ENCODE measurements at regions of chr4 and their contacts with region 1.

Region 1: GRCh38 chr4:43776371-43776770 is 672.2 kb downstream of the KCTD8 start:
- DNase-seq: peak; percentile 29
- H3K4me3 Mint-ChIP-seq: no peak overlapping the region
- H3K27ac Mint-ChIP-seq: no peak overlapping the region
- H3K4me1 Mint-ChIP-seq: no peaks in the 10 kb centered on the region
- H3K27me3 Mint-ChIP-seq: no peaks in the 10 kb centered on the region
- CTCF ChIP-seq: peak; percentile 42

Region 2: DNA sequence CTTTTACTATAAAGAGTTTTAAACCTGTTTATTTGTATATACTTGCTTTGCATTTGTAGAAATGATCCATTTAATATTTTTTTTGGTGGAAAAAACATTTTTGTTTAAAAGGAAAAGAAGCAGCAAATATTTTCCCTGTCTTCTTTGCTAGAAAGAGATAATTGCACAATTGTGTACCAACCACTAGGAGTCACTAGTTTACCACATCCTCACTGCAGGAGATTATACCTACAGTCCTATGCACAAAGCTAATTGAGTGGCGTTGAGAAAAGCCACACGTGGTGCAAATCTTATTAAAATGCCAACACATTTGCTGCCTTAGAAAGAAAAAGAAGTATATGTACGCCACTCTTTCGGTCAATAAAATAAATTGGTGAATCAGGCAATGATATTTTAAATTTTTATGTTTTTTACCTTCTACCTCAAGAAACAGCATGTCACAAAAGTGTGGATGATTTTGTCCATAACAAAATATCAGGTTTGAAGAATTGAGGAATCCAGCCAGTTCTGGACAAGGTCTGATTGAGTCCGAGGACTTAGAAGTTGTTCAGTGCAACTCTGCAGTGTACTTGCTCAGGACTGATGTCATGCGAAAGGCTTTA is 780.9 kb before region 1 on chr4:
- CTCF ChIA-PET with region 1: no interaction called
- POLR2A ChIA-PET with region 1: no interaction called
- intact Hi-C with region 1: loop called (anchors 2 kb)
- DNase-seq: peak; percentile 66
- H3K4me3 Mint-ChIP-seq: no peak overlapping the region
- H3K27ac Mint-ChIP-seq: no peak overlapping the region
- H3K4me1 Mint-ChIP-seq: no peaks in the 10 kb centered on the region
- H3K27me3 Mint-ChIP-seq: no peaks in the 10 kb centered on the region
- CTCF ChIP-seq: peak; percentile 82

Region 3: GRCh38 chr4:44425614-44426208 is 649.3 kb after region 1 on chr4:
- CTCF ChIA-PET with region 1: interaction called, 18 read pairs
- POLR2A ChIA-PET with region 1: no interaction called
- intact Hi-C with region 1: loop called (anchors 1 kb)
- DNase-seq: peak; percentile 67
- H3K4me3 Mint-ChIP-seq: no peak overlapping the region
- H3K27ac Mint-ChIP-seq: no peak overlapping the region
- H3K4me1 Mint-ChIP-seq: no peaks in the 10 kb centered on the region
- H3K27me3 Mint-ChIP-seq: no peaks in the 10 kb centered on the region
- CTCF ChIP-seq: peak; percentile 71

Region 4: GRCh38 chr4:44493924-44494323 is 717.6 kb after region 1 on chr4:
- CTCF ChIA-PET with region 1: no interaction called
- POLR2A ChIA-PET with region 1: no interaction called
- intact Hi-C with region 1: loop called (anchors 5 kb)
- DNase-seq: peak; percentile 50
- H3K4me3 Mint-ChIP-seq: no peak overlapping the region
- H3K27ac Mint-ChIP-seq: no peak overlapping the region
- H3K4me1 Mint-ChIP-seq: peaks cover 10% of the 10 kb centered on the region
- H3K27me3 Mint-ChIP-seq: no peaks in the 10 kb centered on the region
- CTCF ChIP-seq: peak; percentile 26

Region 5: DNA sequence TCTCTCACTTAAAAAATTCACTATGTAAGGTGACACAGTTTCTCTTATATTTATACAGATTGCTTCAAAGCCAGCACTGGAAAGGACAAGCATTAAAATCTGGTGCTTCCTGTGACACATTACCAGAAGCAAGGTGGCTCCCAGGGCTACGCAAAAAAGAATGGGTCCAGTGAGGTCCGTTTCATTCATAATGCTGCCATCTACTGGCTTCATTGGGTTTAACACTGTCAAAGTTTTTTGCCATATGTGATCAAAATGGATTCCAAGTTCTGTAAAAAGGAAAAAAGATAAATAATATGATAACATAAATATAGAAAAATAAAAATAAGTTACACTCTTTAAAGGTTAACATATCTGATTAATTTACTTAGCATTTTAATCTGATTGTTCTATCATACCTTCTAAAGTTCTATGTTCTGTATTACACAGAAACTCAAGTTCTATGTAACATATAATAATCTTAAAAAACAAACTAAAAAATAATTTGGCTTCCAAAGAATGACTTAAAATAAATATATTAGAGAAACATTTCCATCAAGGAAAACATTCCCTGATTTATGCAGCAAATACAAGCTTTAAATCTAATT is 853.0 kb after region 1 on chr4:
- CTCF ChIA-PET with region 1: interaction called, 3 read pairs
- POLR2A ChIA-PET with region 1: no interaction called
- intact Hi-C with region 1: loop called (anchors 2 kb)
- DNase-seq: peak; percentile 72
- H3K4me3 Mint-ChIP-seq: no peak overlapping the region
- H3K27ac Mint-ChIP-seq: peak overlapping the region; percentile 71
- H3K4me1 Mint-ChIP-seq: no peaks in the 10 kb centered on the region
- H3K27me3 Mint-ChIP-seq: no peaks in the 10 kb centered on the region
- CTCF ChIP-seq: peak; percentile 74

Measured in MCF 10A (cell line).